Cardiac septum (tissue), 1 donor: ENCODE measurements at regions of chr10 and their contacts with region 1.

Region 1: GRCh38 chr10:68897336-68897741 is 3.8 kb upstream of the DDX50 start:
- DNase-seq: no peak

Region 2: DNA sequence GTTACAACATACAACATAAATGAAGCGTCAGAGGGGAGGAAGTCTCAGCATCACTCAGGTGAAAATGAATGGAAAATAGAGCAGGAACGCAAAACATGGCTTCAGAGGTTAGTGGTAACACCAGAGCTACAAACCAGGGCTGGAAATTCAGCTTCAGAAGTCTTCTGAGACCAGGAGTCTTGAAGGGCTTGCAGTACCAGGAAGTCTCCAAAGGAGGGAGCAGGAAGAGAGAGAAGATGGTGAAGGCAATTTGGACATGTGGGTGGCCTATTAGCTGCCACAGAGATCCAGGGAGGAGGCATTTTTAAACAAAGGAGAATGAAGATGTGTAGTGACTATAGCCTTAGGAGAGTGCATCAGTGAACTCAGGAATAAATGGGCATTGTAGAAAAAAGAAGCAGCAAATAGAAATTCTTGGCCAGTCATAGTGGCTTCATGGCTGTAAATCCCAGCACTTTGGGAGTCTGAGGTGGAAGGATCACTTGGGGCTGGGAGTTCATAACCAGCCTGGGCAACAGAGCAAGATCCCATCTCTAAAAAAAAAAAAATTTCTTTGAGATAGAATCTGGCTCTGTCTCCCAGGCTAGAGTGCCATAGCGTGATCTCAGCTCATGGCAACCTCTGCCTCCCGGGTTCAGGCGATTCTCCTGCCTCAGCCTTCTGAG is 346.5 kb before region 1 on chr10:
- intact Hi-C with region 1: loop called (anchors 10 kb)
- DNase-seq: no peak

Region 3: DNA sequence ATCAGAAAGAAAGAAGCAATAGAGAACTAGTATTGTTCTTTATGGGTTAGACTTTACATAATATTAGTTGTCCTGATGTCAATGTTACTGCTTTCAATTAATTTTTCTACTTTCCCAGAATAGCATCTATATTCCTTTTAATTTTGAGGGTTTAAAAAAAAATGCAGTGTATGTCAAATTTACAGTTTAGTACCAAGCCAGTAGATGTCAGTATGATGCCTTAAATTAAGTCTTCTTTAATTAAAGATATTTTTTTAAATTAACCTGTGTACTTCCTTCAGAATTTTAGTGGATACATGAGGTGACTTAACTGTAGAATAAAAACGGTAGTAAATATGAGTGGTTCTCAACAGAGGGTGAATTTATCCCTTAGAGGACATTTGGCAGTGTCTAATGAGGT is 105.2 kb before region 1 on chr10:
- intact Hi-C with region 1: loop called (anchors 10 kb)
- DNase-seq: no peak